ENCODE measurements at regions of chrX and their contacts with region 1.

Region 1: DNA sequence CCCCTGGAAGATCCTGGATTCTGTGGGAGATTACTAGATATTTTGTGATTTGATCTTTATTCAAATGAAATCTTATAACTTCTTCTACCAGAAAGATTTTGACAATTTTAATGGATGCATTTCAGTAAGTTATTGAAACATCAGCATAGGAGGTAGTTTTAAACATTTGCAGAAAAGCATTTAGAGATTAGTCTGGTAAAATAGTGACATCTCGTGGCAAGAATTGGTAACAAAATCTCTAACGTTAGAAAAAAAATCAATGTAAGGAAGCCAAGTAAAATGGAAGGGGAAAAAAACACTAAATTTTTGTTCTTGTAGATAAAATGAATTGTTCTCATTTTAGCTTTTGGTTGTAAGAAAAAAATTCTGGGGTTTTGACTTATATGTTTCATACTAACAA is 73.3 kb downstream of the TASL start:
- DNase-seq: peak; percentile 52
- H3K4me3 Mint-ChIP-seq: no peak overlapping the region
- H3K27ac Mint-ChIP-seq: no peak overlapping the region
- H3K4me1 Mint-ChIP-seq: no peaks in the 10 kb centered on the region
- H3K27me3 Mint-ChIP-seq: peaks cover 47% of the 10 kb centered on the region
- CTCF ChIP-seq: peak; percentile 43

Region 2: GRCh38 chrX:30488092-30488491 is 16.2 kb before region 1 on chrX:
- CTCF ChIA-PET with region 1: interaction called, 13 read pairs
- POLR2A ChIA-PET with region 1: no interaction called
- intact Hi-C with region 1: no loop called
- DNase-seq: peak; percentile 21
- H3K4me3 Mint-ChIP-seq: no peak overlapping the region
- H3K27ac Mint-ChIP-seq: no peak overlapping the region
- H3K4me1 Mint-ChIP-seq: no peaks in the 10 kb centered on the region
- H3K27me3 Mint-ChIP-seq: peaks cover 5% of the 10 kb centered on the region
- CTCF ChIP-seq: no peak

Measured in MCF 10A (cell line).